ENCODE measurements at regions of chr9 and their contacts with region 1.

Region 1: DNA sequence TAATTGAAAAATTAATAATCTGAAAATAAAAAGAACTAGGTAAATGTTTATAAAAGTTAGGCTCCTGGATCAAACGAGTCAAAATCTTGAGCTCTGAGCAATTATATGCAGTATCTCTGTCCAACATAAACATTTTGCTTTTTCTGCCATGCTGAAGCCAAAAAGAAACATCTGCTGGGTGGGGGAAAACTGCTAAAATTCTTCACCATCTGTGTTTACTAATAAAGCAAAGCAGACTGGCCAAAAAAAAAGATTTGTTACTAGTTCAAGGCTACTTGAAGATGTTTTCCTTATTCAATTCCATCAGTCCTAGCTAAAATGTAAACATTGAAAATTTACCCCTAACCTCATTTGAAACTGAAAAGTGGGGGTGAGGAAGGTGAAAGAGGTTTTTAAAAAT is 29.7 kb downstream of the GTF3C4 start:
- DNase-seq: no peak
- H3K27ac ChIP-seq: no peak overlapping the region
- CTCF ChIP-seq: no peak

Region 2: GRCh38 chr9:133478851-133479711 is 779.1 kb after region 1 on chr9 and contains the start of gene SLC2A6:
- CTCF ChIA-PET with region 1: no interaction called
- POLR2A ChIA-PET with region 1: interaction called, 10 read pairs
- DNase-seq: peak; percentile 98
- H3K27ac ChIP-seq: peak within 1 kb of the TSS; percentile 74
- CTCF ChIP-seq: no peak

Measured in RWPE1 (cell line).